B cell (primary cell): ENCODE measurements at regions of chr22 and their contacts with region 1.

Region 1: DNA sequence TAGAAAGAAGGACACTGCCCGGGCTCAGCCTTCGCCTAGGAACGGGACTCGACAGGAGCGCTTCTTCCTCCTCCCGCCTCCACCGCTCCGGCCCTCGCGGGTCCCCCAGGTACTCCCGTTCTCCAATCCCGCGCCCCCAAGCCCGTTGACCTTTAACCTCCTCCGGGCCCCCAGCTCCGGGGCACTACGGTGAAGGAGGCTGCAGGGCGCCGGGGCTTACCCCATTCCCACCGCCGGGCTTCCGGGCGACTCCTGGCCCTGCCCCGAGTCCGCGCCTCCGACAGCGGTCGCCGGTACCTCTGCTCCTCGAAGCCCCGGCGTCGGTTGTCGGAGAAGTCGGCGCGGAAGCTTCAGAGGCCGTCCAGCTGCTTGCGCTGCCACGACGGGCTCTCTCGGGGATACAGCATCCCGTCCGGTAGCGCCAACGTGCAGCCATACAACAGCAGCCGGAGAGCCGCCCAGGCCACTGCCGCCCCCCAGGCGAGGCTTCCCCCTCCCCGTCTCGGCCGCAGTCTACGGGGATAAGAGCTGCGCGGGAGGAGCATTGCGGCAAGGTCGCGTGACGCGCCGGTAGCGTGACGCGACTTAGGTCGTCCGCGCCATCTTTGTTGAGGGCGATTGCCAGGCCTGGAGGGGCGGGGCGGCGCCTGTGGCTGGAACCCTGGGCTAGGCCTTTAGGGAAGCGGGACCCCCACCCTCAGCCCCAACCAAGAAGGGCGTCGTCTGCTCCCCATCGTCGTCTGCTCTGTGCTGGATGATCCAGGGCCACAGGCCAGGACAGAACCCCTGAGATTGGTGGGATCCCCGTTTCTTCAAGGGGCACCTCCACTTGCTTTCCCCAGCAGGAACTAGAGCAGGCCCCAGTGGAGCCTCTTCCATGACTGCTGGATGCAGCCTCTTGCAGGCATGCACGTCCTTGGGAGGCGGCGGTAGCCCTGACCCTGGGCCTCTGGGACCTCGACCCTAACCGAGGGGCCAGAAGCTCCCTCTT is 26.3 kb downstream of the RGL4 start:
- DNase-seq: peak; percentile 89
- ATAC-seq: peak; percentile 95
- H3K4me3 ChIP-seq: peak overlapping the region in 4 of 5 experiments; percentile 82 to 88 (median 88)
- H3K4me3 Mint-ChIP-seq: peak overlapping the region; percentile 89
- H3K27ac ChIP-seq: peak overlapping the region; percentile 61 to 84
- H3K27ac Mint-ChIP-seq: peak overlapping the region; percentile 89
- H3K4me1 ChIP-seq: peaks cover 13 to 19% of the 10 kb centered on the region in 2 donors
- H3K4me1 Mint-ChIP-seq: peaks cover 20% of the 10 kb centered on the region
- H3K27me3 ChIP-seq: no peaks in the 10 kb centered on the region
- H3K27me3 Mint-ChIP-seq: no peaks in the 10 kb centered on the region
- CTCF ChIP-seq: no peak

Region 2: DNA sequence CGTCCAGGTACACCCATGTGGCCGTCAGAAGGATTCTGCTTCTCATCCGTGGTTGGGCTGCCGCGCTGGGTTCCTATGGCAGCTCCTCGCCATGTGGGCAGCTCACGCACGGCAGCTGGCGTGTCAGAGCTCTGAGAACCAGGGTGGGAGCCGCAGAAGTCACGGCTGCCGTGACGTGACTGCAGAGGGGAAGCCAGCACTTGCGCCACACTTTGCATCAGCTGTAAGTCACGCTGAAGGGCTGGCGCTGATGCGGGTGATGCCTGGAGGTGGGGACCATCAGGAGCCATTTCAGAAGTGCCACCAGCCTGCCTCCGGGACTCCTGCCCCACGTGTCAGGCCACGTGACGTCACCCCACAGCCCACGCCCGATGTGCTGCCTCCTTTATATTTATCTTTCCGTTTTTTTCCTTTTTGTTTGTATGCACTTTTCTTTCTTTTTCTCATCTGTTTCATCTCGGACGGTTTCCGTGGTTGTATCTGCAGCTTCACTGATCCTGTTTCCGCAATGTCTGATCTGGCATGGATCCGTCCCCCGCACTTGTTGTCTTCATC is 270.2 kb before region 1 on chr22:
- CTCF ChIA-PET with region 1: no interaction called
- POLR2A ChIA-PET with region 1: no interaction called
- intact Hi-C with region 1: no loop called
- DNase-seq: no peak
- ATAC-seq: no peak
- H3K4me3 ChIP-seq: no peak overlapping the region
- H3K4me3 Mint-ChIP-seq: no peak overlapping the region
- H3K27ac ChIP-seq: no peak overlapping the region
- H3K27ac Mint-ChIP-seq: no peak overlapping the region
- H3K4me1 ChIP-seq: no peaks in the 10 kb centered on the region
- H3K4me1 Mint-ChIP-seq: no peaks in the 10 kb centered on the region
- H3K27me3 ChIP-seq: no peaks in the 10 kb centered on the region
- H3K27me3 Mint-ChIP-seq: peaks cover under 1% of the 10 kb centered on the region
- CTCF ChIP-seq: no peak

Region 3: GRCh38 chr22:23574371-23574811 is 142.7 kb before region 1 on chr22:
- CTCF ChIA-PET with region 1: no interaction called
- POLR2A ChIA-PET with region 1: no interaction called
- intact Hi-C with region 1: no loop called
- DNase-seq: no peak
- ATAC-seq: no peak
- H3K4me3 ChIP-seq: no peak overlapping the region
- H3K4me3 Mint-ChIP-seq: no peak overlapping the region
- H3K27ac ChIP-seq: no peak overlapping the region
- H3K27ac Mint-ChIP-seq: no peak overlapping the region
- H3K4me1 ChIP-seq: peaks cover 7 to 12% of the 10 kb centered on the region in 2 donors
- H3K4me1 Mint-ChIP-seq: peaks cover 8% of the 10 kb centered on the region
- H3K27me3 ChIP-seq: peaks cover 0 to 11% (median 5%) of the 10 kb centered on the region in 4 experiments
- H3K27me3 Mint-ChIP-seq: peaks cover 14% of the 10 kb centered on the region
- CTCF ChIP-seq: no peak

Region 4: GRCh38 chr22:23608583-23608982 is 108.5 kb before region 1 on chr22:
- CTCF ChIA-PET with region 1: no interaction called
- POLR2A ChIA-PET with region 1: no interaction called
- intact Hi-C with region 1: no loop called
- DNase-seq: no peak
- ATAC-seq: no peak
- H3K4me3 ChIP-seq: no peak overlapping the region
- H3K4me3 Mint-ChIP-seq: no peak overlapping the region
- H3K27ac ChIP-seq: no peak overlapping the region
- H3K27ac Mint-ChIP-seq: no peak overlapping the region
- H3K4me1 ChIP-seq: no peaks in the 10 kb centered on the region
- H3K4me1 Mint-ChIP-seq: no peaks in the 10 kb centered on the region
- H3K27me3 ChIP-seq: no peaks in the 10 kb centered on the region
- H3K27me3 Mint-ChIP-seq: no peaks in the 10 kb centered on the region
- CTCF ChIP-seq: no peak

Region 5: GRCh38 chr22:23696326-23696851 is 20.7 kb before region 1 on chr22:
- CTCF ChIA-PET with region 1: interaction called, 4 read pairs
- POLR2A ChIA-PET with region 1: interaction called, 7 read pairs
- intact Hi-C with region 1: loop called (anchors 1 kb)
- DNase-seq: peak; percentile 85
- ATAC-seq: peak; percentile 98
- H3K4me3 ChIP-seq: peak overlapping the region; percentile 1 to 36 (median 25)
- H3K4me3 Mint-ChIP-seq: peak overlapping the region; percentile 72
- H3K27ac ChIP-seq: peak overlapping the region; percentile 86 to 92
- H3K27ac Mint-ChIP-seq: peak overlapping the region; percentile 92
- H3K4me1 ChIP-seq: peaks cover 27 to 29% of the 10 kb centered on the region in 2 donors
- H3K4me1 Mint-ChIP-seq: peaks cover 31% of the 10 kb centered on the region
- H3K27me3 ChIP-seq: no peaks in the 10 kb centered on the region
- H3K27me3 Mint-ChIP-seq: no peaks in the 10 kb centered on the region
- CTCF ChIP-seq: no peak

Region 6: DNA sequence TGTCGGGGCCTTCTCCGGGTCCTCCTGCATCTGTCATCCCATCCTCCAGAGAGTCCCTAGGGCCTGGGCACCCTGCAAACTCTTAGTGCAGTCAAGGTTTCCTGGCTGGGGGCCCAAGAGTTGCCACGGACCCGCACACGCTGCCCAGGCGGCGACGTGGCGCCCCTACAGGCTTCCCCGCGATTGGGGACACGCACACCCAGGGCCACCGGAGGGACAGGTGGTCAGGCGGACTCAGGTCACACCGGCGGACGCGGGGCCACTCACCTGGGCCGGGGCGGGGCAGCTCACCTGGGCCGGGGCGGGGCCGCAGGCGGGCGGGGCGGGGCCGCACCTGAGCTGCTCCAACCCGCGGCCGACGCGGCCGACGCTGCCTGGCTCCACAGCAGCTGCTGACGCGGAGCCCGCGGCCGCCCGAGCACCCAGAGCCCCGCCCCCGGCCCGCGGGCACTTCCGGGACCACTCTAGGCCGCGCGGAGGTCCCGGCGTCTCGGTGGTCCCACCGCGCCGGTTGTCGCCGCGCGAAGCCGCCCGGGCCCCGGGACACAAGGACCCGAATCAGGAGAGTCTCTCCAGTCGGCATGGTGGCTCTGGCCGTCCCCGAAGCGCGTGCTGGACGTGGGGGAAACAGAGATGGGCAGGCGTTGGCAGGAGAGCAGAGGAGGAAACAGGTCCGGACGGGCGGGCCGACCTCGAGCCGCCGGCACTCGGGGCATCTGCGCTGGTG is 33.8 kb after region 1 on chr22 and contains the start of gene ZNF70:
- CTCF ChIA-PET with region 1: interaction called, 4 read pairs
- POLR2A ChIA-PET with region 1: interaction called, 17 read pairs
- intact Hi-C with region 1: loop called (anchors 1 kb)
- DNase-seq: peak; percentile 92
- ATAC-seq: peak; percentile 56
- H3K4me3 ChIP-seq: peak within 1 kb of the TSS; percentile 6 to 88 (median 83)
- H3K4me3 Mint-ChIP-seq: peak within 1 kb of the TSS; percentile 93
- H3K27ac ChIP-seq: peak within 1 kb of the TSS; percentile 85 to 98
- H3K27ac Mint-ChIP-seq: peak within 1 kb of the TSS; percentile 99
- H3K4me1 ChIP-seq: peaks cover 24 to 53% of the 10 kb centered on the region in 2 donors
- H3K4me1 Mint-ChIP-seq: peaks cover 55% of the 10 kb centered on the region
- H3K27me3 ChIP-seq: no peaks in the 10 kb centered on the region
- H3K27me3 Mint-ChIP-seq: no peaks in the 10 kb centered on the region
- CTCF ChIP-seq: no peak
- total RNA-seq, gene ZNF70: 8.3 and 9.6 TPM in 2 replicates

Region 7: DNA sequence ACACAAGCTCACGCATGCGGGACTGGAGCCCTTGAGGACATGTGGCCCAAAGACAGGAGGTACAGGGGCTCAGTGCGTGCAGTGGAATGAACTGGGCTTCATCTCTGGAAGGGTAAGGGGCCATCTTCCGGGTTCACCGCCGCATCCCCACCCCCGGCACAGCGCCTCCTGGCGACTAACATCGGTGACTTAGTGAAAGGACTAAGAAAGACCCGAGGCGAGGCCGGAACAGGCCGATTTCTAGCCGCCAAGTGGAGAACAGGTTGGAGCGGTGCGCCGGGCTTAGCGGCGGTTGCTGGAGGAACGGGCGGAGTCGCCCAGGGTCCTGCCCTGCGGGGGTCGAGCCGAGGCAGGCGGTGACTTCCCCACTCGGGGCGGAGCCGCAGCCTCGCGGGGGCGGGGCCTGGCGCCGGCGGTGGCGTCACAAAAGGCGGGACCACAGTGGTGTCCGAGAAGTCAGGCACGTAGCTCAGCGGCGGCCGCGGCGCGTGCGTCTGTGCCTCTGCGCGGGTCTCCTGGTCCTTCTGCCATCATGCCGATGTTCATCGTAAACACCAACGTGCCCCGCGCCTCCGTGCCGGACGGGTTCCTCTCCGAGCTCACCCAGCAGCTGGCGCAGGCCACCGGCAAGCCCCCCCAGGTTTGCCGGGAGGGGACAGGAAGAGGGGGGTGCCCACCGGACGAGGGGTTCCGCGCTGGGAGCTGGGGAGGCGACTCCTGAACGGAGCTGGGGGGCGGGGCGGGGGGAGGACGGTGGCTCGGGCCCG is 177.0 kb after region 1 on chr22 and contains the start of gene MIF:
- CTCF ChIA-PET with region 1: no interaction called
- POLR2A ChIA-PET with region 1: no interaction called
- intact Hi-C with region 1: loop called (anchors 1 kb)
- DNase-seq: peak; percentile 96
- ATAC-seq: peak; percentile 92
- H3K4me3 ChIP-seq: peak within 1 kb of the TSS; percentile 26 to 88 (median 84)
- H3K4me3 Mint-ChIP-seq: peak within 1 kb of the TSS; percentile 93
- H3K27ac ChIP-seq: peak within 1 kb of the TSS; percentile 87 to 89
- H3K27ac Mint-ChIP-seq: peak within 1 kb of the TSS; percentile 98
- H3K4me1 ChIP-seq: peaks cover 13 to 19% of the 10 kb centered on the region in 2 donors
- H3K4me1 Mint-ChIP-seq: peaks cover 28% of the 10 kb centered on the region
- H3K27me3 ChIP-seq: no peaks in the 10 kb centered on the region
- H3K27me3 Mint-ChIP-seq: no peaks in the 10 kb centered on the region
- CTCF ChIP-seq: peak; percentile 76
- total RNA-seq, gene MIF: 125 and 143 TPM in 2 replicates